IMR-90 (cell line): ENCODE measurements at regions of chr10 and their contacts with region 1.

Region 1: GRCh38 chr10:99527526-99528493 is 4.9 kb upstream of the NKX2-3 start:
- DNase-seq: no peak
- ATAC-seq: no peak
- H3K4me3 ChIP-seq: no peak overlapping the region
- H3K27ac ChIP-seq: no peak overlapping the region
- H3K4me1 ChIP-seq: no peaks in the 10 kb centered on the region
- H3K27me3 ChIP-seq: peaks cover 92% of the 10 kb centered on the region
- CTCF ChIP-seq: no peak
- POLR2A ChIP-seq: no peak
- RAD21 ChIP-seq: no peak

Region 2: DNA sequence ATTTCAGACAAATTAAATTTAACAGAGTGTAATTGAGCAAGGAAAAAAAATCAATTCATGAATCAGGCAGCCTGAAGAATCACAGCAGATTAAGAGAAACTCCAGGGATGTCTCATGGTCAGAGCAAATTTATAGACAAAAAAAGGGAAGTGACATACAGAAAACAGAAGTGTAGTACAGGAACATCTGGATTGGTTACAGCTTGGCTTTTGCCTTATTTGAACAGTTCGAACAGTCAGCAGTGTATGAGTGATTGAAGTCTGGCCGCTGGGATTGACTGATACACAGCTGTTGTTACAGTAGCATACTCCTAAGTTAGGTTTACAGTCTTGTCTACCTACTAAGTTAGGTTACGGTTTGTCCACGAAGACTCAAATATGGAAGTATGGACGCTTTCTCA is 547.5 kb before region 1 on chr10:
- CTCF ChIA-PET with region 1: no interaction called
- POLR2A ChIA-PET with region 1: no interaction called
- dilution Hi-C with region 1: no loop called
- in situ Hi-C with region 1: no loop called
- intact Hi-C with region 1: no loop called
- DNase-seq: no peak
- ATAC-seq: no peak
- H3K4me3 ChIP-seq: no peak overlapping the region
- H3K27ac ChIP-seq: no peak overlapping the region
- H3K4me1 ChIP-seq: no peaks in the 10 kb centered on the region
- H3K27me3 ChIP-seq: no peaks in the 10 kb centered on the region; the same call in 1 of the 2 replicates
- CTCF ChIP-seq: no peak
- POLR2A ChIP-seq: no peak
- RAD21 ChIP-seq: no peak

Region 3: DNA sequence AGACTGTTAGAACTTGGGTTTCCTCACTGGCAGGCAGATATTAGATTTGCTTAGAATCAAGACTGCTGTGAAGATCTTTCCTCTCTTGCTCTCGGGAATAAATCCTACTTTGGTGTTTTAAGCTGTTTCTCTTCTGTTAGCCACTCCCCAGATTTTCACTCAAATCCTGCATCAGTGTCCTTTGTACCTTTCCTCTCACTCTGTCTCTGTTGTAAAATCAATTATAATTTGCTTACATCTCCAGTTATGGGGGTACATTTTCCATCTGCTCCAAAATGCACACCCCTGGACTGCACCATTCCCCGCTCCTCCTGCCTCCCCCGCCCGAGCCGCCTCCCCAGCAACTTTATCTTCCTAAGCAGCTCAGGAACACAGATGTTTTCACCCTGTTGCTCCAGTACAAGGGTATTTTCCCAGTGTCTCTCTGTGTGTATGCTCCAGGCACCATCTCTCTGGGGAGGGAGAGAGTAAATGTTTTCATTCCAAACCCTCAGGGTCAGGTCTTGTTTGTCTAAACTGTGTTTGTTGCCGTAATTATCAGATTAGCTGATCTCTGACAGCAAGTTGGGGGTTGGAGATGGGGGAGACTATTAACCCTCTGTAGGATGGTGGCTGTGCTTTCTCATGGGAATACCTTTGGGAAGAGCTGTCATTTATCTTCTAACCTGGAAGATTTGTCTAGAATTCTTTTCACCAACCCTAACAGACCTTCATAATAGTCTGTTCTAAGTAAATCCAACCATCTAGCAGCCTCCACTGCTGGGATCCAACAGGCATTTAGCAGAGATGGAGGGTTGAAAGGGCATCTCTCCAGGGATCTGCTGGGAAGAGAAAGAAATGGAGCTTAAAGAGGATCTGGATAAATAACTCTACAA is 76.9 kb before region 1 on chr10:
- CTCF ChIA-PET with region 1: no interaction called
- POLR2A ChIA-PET with region 1: no interaction called
- dilution Hi-C with region 1: no loop called
- in situ Hi-C with region 1: no loop called
- intact Hi-C with region 1: loop called (anchors 5 kb)
- DNase-seq: peak; percentile 34
- ATAC-seq: peak; percentile 91
- H3K4me3 ChIP-seq: no peak overlapping the region
- H3K27ac ChIP-seq: peak overlapping the region; percentile 49; the same call in 1 of the 2 replicates
- H3K4me1 ChIP-seq: peaks cover 7% of the 10 kb centered on the region; the same call in 1 of the 2 replicates
- H3K27me3 ChIP-seq: peaks cover 38% of the 10 kb centered on the region
- CTCF ChIP-seq: no peak
- POLR2A ChIP-seq: no peak
- RAD21 ChIP-seq: no peak

Region 4: GRCh38 chr10:99888622-99889021 is 360.8 kb after region 1 on chr10:
- CTCF ChIA-PET with region 1: no interaction called
- POLR2A ChIA-PET with region 1: no interaction called
- dilution Hi-C with region 1: no loop called
- in situ Hi-C with region 1: no loop called
- intact Hi-C with region 1: no loop called
- DNase-seq: peak; percentile 77
- ATAC-seq: peak; percentile 77
- H3K4me3 ChIP-seq: no peak overlapping the region
- H3K27ac ChIP-seq: no peak overlapping the region
- H3K4me1 ChIP-seq: peaks cover 3% of the 10 kb centered on the region; the same call in 1 of the 2 replicates
- H3K27me3 ChIP-seq: no peaks in the 10 kb centered on the region
- CTCF ChIP-seq: no peak
- POLR2A ChIP-seq: no peak
- RAD21 ChIP-seq: no peak